ENCODE measurements at regions of chr12 and their contacts with region 1.

Region 1: GRCh38 chr12:132986001-132986912 is at the start of gene ZNF26:
- DNase-seq: peak; percentile 81 to 83
- H3K4me3 ChIP-seq: peak within 1 kb of the TSS; percentile 90
- H3K27ac ChIP-seq: no peak within 1 kb of the TSS
- H3K4me1 ChIP-seq: peaks cover 12% of the 10 kb centered on the region
- H3K27me3 ChIP-seq: no peaks in the 10 kb centered on the region
- CTCF ChIP-seq: no peak
- total RNA-seq, gene ZNF26: 13.2 and 20.6 TPM in 2 replicates

Region 2: GRCh38 chr12:132828706-132829534 is 157.3 kb before region 1 on chr12 and contains the start of gene GOLGA3:
- CTCF ChIA-PET with region 1: no interaction called
- POLR2A ChIA-PET with region 1: no interaction called
- intact Hi-C with region 1: loop called (anchors 1 kb)
- DNase-seq: peak; percentile 70 to 90
- H3K4me3 ChIP-seq: peak within 1 kb of the TSS; percentile 92
- H3K27ac ChIP-seq: peak within 1 kb of the TSS; percentile 91
- H3K4me1 ChIP-seq: peaks cover 13% of the 10 kb centered on the region; the same call in 1 of the 2 replicates
- H3K27me3 ChIP-seq: no peaks in the 10 kb centered on the region
- CTCF ChIP-seq: no peak
- total RNA-seq, gene GOLGA3: 69.3 and 72.7 TPM in 2 replicates

Region 3: GRCh38 chr12:132887513-132888351 is 98.5 kb before region 1 on chr12 and contains the start of gene CHFR:
- CTCF ChIA-PET with region 1: no interaction called
- POLR2A ChIA-PET with region 1: no interaction called
- intact Hi-C with region 1: loop called (anchors 2 kb)
- DNase-seq: peak; percentile 88 to 92
- H3K4me3 ChIP-seq: peak within 1 kb of the TSS; percentile 95
- H3K27ac ChIP-seq: peak within 1 kb of the TSS; percentile 88
- H3K4me1 ChIP-seq: no peaks in the 10 kb centered on the region
- H3K27me3 ChIP-seq: 0 out of 2 replicates have a peak, but pooled peaks cover 3% of the 10 kb centered on the region
- CTCF ChIP-seq: no peak
- total RNA-seq, gene CHFR: 15.5 and 17.8 TPM in 2 replicates

Region 4: DNA sequence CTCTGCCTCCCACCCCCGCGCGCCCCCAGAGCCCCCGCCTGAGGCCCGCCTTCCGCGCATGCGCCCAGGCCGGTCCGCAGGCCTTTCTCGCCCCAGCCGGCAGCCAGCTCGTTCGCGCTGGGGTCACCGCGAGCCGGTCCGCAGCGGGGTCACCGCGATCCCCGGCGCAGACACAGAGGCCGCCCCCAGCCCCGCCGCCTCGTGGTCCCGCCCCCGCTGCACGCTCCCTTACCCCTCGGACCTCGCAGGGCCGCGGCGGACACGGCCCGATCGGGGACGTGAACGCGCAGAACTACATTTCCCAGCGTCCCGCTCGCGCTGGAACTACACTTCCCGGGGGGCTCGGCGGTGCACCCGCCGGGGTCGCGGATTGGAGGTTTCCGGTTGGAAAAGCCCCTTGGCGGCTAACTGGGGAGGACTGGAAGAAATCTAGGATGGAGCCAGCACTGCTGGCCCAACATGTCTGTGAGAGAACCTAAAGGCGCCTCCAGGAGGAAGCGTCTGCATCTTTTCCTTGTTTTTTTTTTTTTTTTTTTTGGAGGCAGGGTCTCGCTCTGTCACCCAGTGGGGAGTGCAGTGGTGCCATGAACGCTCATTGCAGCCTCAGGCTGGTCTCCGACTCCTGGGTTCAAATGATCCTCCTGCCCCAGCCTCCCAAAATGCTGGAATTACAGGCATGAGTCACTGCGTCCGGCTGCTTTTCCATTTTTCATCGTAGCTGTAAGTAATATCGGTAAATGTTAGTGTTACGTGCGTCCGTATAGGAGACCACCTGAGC is 30.1 kb before region 1 on chr12 and contains the start of gene ZNF605:
- CTCF ChIA-PET with region 1: interaction called, 3 read pairs
- POLR2A ChIA-PET with region 1: interaction called, 3 read pairs
- intact Hi-C with region 1: loop called (anchors 1 kb)
- DNase-seq: peak; percentile 67 to 84
- H3K4me3 ChIP-seq: peak within 1 kb of the TSS; percentile 98
- H3K27ac ChIP-seq: no peak within 1 kb of the TSS
- H3K4me1 ChIP-seq: no peaks in the 10 kb centered on the region
- H3K27me3 ChIP-seq: no peaks in the 10 kb centered on the region
- CTCF ChIP-seq: no peak
- total RNA-seq, gene ZNF605: 10.9 and 13.5 TPM in 2 replicates

Region 5: DNA sequence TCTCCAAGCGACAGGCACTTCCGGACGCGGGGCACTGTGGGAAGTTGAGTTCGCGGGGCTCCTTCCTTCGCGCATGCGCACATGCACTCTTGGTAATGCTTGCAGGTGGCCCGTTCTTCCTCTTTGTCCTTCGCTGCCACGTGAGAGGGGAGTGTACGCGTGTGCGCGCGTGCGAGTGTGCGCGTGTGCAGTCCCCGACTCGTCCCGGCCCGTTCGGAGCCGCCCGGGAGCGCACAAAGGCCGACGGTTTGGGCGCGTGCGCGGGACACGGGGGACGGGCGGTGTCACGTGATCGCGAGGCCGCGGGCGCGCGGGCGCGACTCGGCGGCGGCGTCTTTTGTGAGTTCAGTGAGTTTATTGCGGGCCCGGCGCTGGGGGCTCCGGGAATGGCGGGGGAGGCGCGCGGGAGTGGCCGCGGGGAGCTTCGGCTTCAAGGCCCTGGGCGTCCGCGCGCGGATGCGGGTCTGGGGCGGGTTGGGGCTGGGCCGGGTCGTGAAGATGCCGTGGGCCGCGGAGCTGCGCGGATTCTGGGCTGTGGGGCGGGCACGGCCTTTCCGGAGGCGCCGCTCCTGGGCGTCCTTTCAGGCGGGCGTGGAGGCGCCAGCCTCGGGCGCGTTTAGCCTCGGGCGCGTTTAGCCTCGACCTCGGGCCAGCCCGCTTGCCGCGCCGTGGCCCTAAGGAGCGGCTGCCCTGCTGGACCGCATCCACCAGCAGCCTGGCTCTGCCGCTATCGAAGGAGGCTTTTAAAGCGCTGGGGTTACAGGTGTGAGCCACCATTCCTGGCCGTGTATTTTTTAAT is 51.1 kb after region 1 on chr12 and contains the start of gene ZNF84:
- CTCF ChIA-PET with region 1: no interaction called
- POLR2A ChIA-PET with region 1: no interaction called
- intact Hi-C with region 1: loop called (anchors 1 kb)
- DNase-seq: peak; percentile 88 to 92
- H3K4me3 ChIP-seq: peak within 1 kb of the TSS; percentile 80
- H3K27ac ChIP-seq: peak within 1 kb of the TSS; percentile 80
- H3K4me1 ChIP-seq: no peaks in the 10 kb centered on the region
- H3K27me3 ChIP-seq: no peaks in the 10 kb centered on the region; the same call in 1 of the 2 replicates
- CTCF ChIP-seq: no peak
- total RNA-seq, gene ZNF84: 16.2 and 18.0 TPM in 2 replicates

Region 6: GRCh38 chr12:133080368-133081158 is 94.3 kb after region 1 on chr12 and contains the start of gene ZNF140:
- CTCF ChIA-PET with region 1: no interaction called
- POLR2A ChIA-PET with region 1: interaction called, 5 read pairs
- intact Hi-C with region 1: loop called (anchors 1 kb)
- DNase-seq: peak; percentile 87 to 92
- H3K4me3 ChIP-seq: peak within 1 kb of the TSS; percentile 85
- H3K27ac ChIP-seq: peak within 1 kb of the TSS; percentile 96
- H3K4me1 ChIP-seq: peaks cover 7% of the 10 kb centered on the region; the same call in 1 of the 2 replicates
- H3K27me3 ChIP-seq: no peaks in the 10 kb centered on the region
- CTCF ChIP-seq: peak; percentile 42; the same call in 1 of the 2 replicates
- total RNA-seq, gene ZNF140: 10.2 and 11.1 TPM in 2 replicates

Region 7: DNA sequence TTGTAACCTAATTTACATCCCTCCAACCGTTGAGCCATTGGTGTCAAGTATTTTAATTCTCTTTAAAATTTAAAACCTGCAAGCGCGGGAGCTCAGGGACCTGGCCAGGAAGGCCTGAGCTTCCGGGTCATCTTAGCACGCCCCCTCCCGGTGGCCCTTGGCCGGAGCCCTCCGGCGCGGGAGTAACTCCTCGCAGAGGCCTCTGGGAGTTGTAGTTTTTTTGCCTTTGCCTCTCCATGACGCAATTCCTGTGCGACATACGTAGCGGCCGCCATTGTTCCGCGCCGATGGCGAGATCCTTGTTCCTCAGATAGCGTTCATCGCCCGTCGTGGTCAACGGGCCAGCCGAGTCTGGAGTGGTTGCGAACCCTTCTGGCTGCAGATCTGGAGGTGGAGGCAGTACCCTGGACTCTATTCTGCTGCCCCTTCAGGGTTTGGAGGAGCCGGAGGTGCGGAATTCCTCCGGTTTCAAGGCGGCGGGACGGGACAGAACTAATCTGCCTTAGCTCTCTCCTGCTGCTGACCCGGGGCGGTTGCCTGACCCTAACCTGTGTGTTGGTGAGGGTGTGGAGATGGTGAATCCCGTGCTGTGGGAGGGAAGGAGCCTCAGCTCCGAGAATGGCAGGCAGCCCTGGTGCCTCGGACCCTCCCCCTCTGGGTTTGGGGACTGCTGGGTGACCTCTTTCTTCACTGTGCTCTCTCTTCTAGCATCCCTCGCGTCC is 195.1 kb after region 1 on chr12 and contains the start of gene ZNF268:
- CTCF ChIA-PET with region 1: interaction called, 10 read pairs
- POLR2A ChIA-PET with region 1: no interaction called
- intact Hi-C with region 1: loop called (anchors 1 kb)
- DNase-seq: peak; percentile 79 to 91
- H3K4me3 ChIP-seq: peak within 1 kb of the TSS; percentile 65
- H3K27ac ChIP-seq: peak within 1 kb of the TSS; percentile 40; the same call in 1 of the 2 replicates
- H3K4me1 ChIP-seq: no peaks in the 10 kb centered on the region
- H3K27me3 ChIP-seq: no peaks in the 10 kb centered on the region
- CTCF ChIP-seq: peak; percentile 84
- total RNA-seq, gene ZNF268: 14.0 and 14.7 TPM in 2 replicates

Measured in PC-9 (cell line).